CD14-positive monocyte (primary cell): ENCODE measurements at regions of chr17 and their contacts with region 1.

Region 1: GRCh38 chr17:7740481-7741001 is 23.0 kb downstream of the DNAH2 start:
- DNase-seq: no peak
- H3K4me3 ChIP-seq: no peak overlapping the region
- H3K4me3 Mint-ChIP-seq: peak overlapping the region; percentile 37 to 80
- H3K27ac ChIP-seq: no peak overlapping the region
- H3K27ac Mint-ChIP-seq: no peak overlapping the region
- H3K4me1 ChIP-seq: peaks cover 0 to 2% of the 10 kb centered on the region in 2 donors
- H3K4me1 Mint-ChIP-seq: peaks cover 6% of the 10 kb centered on the region
- H3K27me3 ChIP-seq: no peaks in the 10 kb centered on the region
- H3K27me3 Mint-ChIP-seq: peaks cover 8 to 10% (median 9%) of the 10 kb centered on the region in 3 donors
- CTCF ChIP-seq: no peak

Region 2: GRCh38 chr17:7716901-7717755 is 23.4 kb before region 1 on chr17 and contains the start of gene DNAH2:
- intact Hi-C with region 1: no loop called
- DNase-seq: peak; percentile 16 to 37 (median 23)
- H3K4me3 ChIP-seq: peak within 1 kb of the TSS in 2 of 3 experiments; percentile 27 to 67
- H3K4me3 Mint-ChIP-seq: peak within 1 kb of the TSS; percentile 68 to 87
- H3K27ac ChIP-seq: no peak within 1 kb of the TSS
- H3K27ac Mint-ChIP-seq: no peak within 1 kb of the TSS
- H3K4me1 ChIP-seq: peaks cover 16% of the 10 kb centered on the region in 2 donors
- H3K4me1 Mint-ChIP-seq: peaks cover 20% of the 10 kb centered on the region
- H3K27me3 ChIP-seq: peaks cover 19 to 74% of the 10 kb centered on the region in 2 donors
- H3K27me3 Mint-ChIP-seq: peaks cover 55 to 90% (median 57%) of the 10 kb centered on the region in 3 donors
- CTCF ChIP-seq: peak; percentile 24
- polyA plus RNA-seq, gene DNAH2: 0.03 to 0.15 TPM in 2 of 3 donors, not detected in the other

Region 3: GRCh38 chr17:7897773-7898172 is 157.2 kb after region 1 on chr17:
- intact Hi-C with region 1: loop called (anchors 5 kb)
- DNase-seq: peak; percentile 52 to 67 (median 54)
- H3K4me3 ChIP-seq: no peak overlapping the region
- H3K4me3 Mint-ChIP-seq: no peak overlapping the region
- H3K27ac ChIP-seq: peak overlapping the region in 1 of 2 donors; percentile 18
- H3K27ac Mint-ChIP-seq: peak overlapping the region in 6 of 7 donors; percentile 13 to 84 (median 54)
- H3K4me1 ChIP-seq: no peaks in the 10 kb centered on the region
- H3K4me1 Mint-ChIP-seq: peaks cover 8% of the 10 kb centered on the region
- H3K27me3 ChIP-seq: no peaks in the 10 kb centered on the region
- H3K27me3 Mint-ChIP-seq: peaks cover 0 to 3% (median 2%) of the 10 kb centered on the region in 3 donors
- CTCF ChIP-seq: peak; percentile 74

Region 4: GRCh38 chr17:7989781-7990655 is 249.5 kb after region 1 on chr17:
- intact Hi-C with region 1: loop called in 1 of 2 experiments (anchors 5 kb)
- DNase-seq: peak; percentile 68 to 73 (median 70)
- H3K4me3 ChIP-seq: peak overlapping the region; percentile 47 to 84 (median 50)
- H3K4me3 Mint-ChIP-seq: peak overlapping the region; percentile 73 to 85
- H3K27ac ChIP-seq: peak overlapping the region; percentile 54 to 65
- H3K27ac Mint-ChIP-seq: peak overlapping the region in 5 of 7 donors; percentile 22 to 87 (median 77)
- H3K4me1 ChIP-seq: peaks cover 21 to 29% of the 10 kb centered on the region in 2 donors
- H3K4me1 Mint-ChIP-seq: peaks cover 23% of the 10 kb centered on the region
- H3K27me3 ChIP-seq: no peaks in the 10 kb centered on the region
- H3K27me3 Mint-ChIP-seq: no peaks in the 10 kb centered on the region
- CTCF ChIP-seq: peak; percentile 99